Common myeloid progenitor, CD34-positive (primary cell): ENCODE measurements at regions of chr1 and their contacts with region 1.

Region 1: DNA sequence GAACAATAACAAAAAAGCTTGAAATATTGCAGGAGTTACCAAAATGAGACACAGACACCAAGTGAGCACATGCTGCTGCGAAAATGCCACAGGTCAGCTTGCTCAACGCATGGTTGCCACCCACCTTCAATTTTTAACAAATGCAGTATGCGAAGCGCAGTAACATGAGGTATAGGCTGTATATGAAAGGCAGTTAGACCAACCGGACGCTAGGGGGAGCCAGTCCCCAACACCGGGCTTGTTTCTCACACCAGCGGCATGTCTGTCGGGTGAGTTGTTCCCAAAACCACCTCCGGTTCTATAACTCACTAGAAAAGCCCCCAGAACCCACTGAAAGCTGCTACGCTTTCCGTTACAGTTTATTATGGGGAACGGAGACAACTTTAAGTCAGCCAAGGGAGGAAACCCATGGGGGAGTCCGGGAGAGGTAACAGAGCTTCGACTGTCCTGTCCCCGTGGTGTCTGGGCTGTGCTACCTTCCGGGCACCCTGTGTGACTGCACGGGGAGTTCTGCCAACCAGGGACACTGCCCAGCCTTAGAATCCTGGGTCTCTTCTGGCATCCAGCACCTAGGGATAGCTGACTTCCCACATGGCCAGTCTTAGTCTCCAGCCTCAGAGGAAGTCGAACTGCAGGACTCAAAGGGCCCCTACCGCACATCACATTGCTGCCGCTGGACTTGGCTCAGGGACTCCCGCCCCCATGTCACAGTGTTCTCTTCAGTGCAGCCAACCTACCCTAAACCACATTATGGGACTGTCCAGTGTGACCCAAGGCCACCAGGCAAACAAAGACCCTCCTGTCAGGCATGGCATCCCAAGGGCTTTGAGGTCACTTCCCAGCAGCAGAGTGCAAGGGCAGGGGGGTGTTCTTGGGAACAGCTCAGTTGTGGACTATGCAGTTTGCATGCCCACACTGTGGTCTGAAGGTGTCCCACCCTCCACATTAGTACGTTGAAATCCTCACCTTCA is 14.0 kb downstream of the RNF187 start:
- DNase-seq: peak; percentile 91 to 97 (median 94)
- H3K4me3 ChIP-seq: peak overlapping the region in 4 of 7 experiments; percentile 11 to 83 (median 60)
- H3K27ac ChIP-seq: peak overlapping the region in 1 of 2 experiments; percentile 16
- H3K4me1 ChIP-seq: peaks cover 4 to 22% (median 16%) of the 10 kb centered on the region in 4 experiments
- H3K27me3 ChIP-seq: peaks cover 0 to 2% (median 0%) of the 10 kb centered on the region in 5 experiments

Region 2: GRCh38 chr1:228486596-228487335 is 14.4 kb before region 1 on chr1:
- CTCF ChIA-PET with region 1: interaction called, 14 read pairs
- POLR2A ChIA-PET with region 1: no interaction called
- DNase-seq: peak; percentile 82 to 92 (median 85)
- H3K4me3 ChIP-seq: peak overlapping the region; percentile 86 to 99 (median 95)
- H3K27ac ChIP-seq: peak overlapping the region; percentile 100
- H3K4me1 ChIP-seq: peaks cover 0 to 16% (median 14%) of the 10 kb centered on the region in 4 experiments
- H3K27me3 ChIP-seq: no peaks in the 10 kb centered on the region

Region 3: DNA sequence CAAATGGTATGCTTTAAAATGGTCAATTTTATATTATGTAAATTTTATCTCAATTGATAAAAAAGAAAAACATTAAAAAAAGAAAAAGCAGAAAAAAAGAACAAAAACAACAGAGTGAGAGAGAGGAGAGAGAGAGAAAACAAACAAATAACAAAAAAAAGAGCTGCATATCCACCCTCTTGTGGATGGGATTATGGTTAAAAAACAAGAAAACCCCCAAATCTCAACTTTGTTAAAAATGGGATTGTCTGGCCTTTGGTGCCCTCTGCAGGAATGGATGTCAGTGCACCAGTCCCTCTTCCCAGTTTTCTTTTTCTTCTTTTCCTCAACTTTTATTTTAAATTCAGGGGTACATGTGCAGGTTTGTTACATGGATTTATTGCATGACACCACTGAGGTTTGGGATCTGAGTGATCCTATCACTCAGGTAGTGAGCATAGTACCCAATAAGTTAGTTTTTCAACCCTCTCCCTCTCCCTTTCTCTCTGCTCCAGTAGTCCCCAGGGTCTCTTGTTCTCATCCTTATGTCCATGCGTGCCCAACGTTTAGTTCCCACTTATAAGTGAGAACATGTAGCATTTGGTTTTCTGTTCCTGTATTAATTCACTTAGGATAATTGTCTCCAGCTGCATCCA is 14.1 kb after region 1 on chr1:
- CTCF ChIA-PET with region 1: interaction called, 67 read pairs
- POLR2A ChIA-PET with region 1: no interaction called
- DNase-seq: peak; percentile 78 to 81 (median 80)
- H3K4me3 ChIP-seq: no peak overlapping the region
- H3K27ac ChIP-seq: no peak overlapping the region
- H3K4me1 ChIP-seq: peaks cover 0 to 25% (median 13%) of the 10 kb centered on the region in 4 experiments
- H3K27me3 ChIP-seq: peaks cover 0 to 25% (median 16%) of the 10 kb centered on the region in 5 experiments